PC-3 (cell line): ENCODE measurements at regions of chr13 and their contacts with region 1.

Region 1: DNA sequence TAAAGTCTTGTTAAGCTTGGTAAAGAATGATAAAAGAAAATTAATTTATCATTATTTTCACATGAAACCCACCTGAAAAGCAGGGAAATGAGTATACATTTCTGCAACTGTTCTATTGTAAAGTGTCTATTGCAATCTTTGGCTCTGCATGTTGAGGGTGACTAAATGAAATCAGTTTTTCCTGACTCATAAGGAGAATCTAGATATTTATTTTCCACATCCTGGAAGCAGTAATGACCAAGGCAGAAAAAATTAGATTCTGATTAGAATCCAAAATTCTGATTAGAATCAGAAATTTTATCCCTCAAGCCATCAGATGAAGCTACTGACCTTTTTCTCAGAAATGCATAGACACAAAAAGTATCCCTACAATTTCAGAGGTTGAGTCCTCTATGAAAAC is 178.4 kb downstream of the MYO16 start:
- DNase-seq: no peak
- ATAC-seq: no peak
- H3K4me3 ChIP-seq: no peak overlapping the region
- H3K27ac ChIP-seq: no peak overlapping the region
- H3K4me1 ChIP-seq: no peaks in the 10 kb centered on the region
- H3K27me3 ChIP-seq: no peaks in the 10 kb centered on the region
- CTCF ChIP-seq: no peak

Region 2: GRCh38 chr13:107284173-107284572 is 1523.7 kb before region 1 on chr13:
- CTCF ChIA-PET with region 1: no interaction called
- POLR2A ChIA-PET with region 1: interaction called, 14 read pairs
- intact Hi-C with region 1: no loop called
- DNase-seq: peak; percentile 37
- ATAC-seq: peak; percentile 71
- H3K4me3 ChIP-seq: no peak overlapping the region
- H3K27ac ChIP-seq: 0 out of 2 replicates have a peak overlapping the region, but pooled peaks have one; percentile 30
- H3K4me1 ChIP-seq: peaks cover 11% of the 10 kb centered on the region
- H3K27me3 ChIP-seq: no peaks in the 10 kb centered on the region
- CTCF ChIP-seq: no peak

Region 3: GRCh38 chr13:108533842-108534241 is 274.0 kb before region 1 on chr13:
- CTCF ChIA-PET with region 1: no interaction called
- POLR2A ChIA-PET with region 1: no interaction called
- intact Hi-C with region 1: no loop called
- DNase-seq: no peak
- ATAC-seq: no peak
- H3K4me3 ChIP-seq: no peak overlapping the region
- H3K27ac ChIP-seq: no peak overlapping the region
- H3K4me1 ChIP-seq: no peaks in the 10 kb centered on the region
- H3K27me3 ChIP-seq: no peaks in the 10 kb centered on the region
- CTCF ChIP-seq: no peak